ENCODE measurements at regions of chr5 and their contacts with region 1.

Region 1: DNA sequence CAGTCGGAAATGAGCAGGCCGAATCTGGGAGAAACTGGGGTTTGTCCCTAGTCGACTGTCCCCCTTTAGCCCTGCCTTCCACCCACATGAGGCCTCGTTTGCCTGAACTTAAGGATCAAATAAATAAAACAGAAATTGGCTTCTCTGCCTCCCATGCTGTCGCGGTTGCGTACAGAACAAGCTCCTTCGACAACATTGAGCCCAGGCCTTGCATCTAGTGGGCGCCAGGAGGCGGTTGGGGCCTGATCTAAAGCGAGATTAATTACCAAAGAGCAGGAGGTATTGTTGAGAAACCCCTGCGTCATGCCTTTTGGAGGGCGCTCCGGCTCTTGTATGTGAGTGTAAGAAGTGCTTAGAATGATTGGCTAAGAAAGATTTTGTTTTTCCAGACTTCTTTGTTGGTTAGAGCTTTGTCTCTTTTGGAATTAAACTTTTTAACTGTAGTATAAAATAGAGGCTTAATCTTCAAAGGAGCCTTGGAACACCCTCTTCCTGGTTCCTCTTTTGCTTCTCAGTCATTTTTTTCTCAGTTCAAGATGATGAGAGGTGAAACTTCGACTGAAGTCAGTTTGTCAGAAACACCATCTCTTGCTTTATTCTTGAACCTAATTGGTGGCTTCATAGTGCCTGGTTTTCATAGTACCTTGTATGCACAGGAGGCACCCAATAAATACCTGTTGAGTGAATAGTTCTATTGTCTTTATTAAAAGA is 827 bp downstream of the ATP6V0E1 start:
- DNase-seq: peak; percentile 74 to 88
- ATAC-seq: peak; percentile 85
- H3K4me3 ChIP-seq: peak overlapping the region; percentile 79 to 91 (median 82)
- H3K27ac ChIP-seq: peak overlapping the region; percentile 95 to 98 (median 96)
- H3K4me1 ChIP-seq: peaks cover 8 to 23% of the 10 kb centered on the region in 2 donors
- H3K27me3 ChIP-seq: no peaks in the 10 kb centered on the region
- CTCF ChIP-seq: peak; percentile 15 to 56 (median 41)
- POLR2A ChIP-seq: no peak

Region 2: DNA sequence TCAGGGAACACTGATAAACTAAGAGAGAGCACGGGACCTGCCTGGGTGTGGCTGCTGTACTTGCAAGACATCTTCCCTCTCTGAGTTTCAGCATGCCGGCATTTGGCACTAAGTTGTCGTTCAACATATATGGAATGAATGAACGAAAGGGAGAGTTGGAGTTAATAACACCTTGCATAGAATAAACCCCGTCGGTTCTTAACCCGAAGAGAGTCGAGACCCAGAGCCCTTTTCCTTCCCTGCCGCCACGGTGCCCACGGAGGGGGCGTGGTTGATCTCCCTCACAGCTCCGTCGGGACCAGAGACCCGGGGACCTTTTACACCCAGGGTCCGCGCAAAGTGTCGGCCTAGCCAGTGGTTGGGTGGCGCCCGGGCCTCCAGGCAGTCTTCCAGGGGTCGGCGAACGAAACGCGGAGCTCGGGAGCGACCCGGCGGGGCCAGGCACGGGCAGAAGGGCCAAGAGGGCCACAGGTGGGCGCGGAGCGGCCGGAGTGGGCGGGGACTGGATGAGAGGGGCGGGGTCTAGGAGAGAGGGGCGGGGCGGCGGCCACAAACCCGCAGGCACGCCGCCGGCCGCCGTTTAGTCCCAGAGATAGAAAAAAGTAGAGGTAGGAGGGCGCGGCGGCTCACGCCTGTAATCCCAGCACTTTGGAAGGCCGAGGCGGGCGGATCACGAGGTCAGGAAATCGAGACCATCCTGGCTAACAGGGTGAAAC is 25.9 kb before region 1 on chr5:
- in situ Hi-C with region 1: no loop called
- intact Hi-C with region 1: loop called (anchors 1 kb)
- DNase-seq: peak; percentile 37 to 41
- ATAC-seq: peak; percentile 77 to 78
- H3K4me3 ChIP-seq: peak overlapping the region; percentile 65 to 98 (median 96)
- H3K27ac ChIP-seq: peak overlapping the region; percentile 68 to 92 (median 86)
- H3K4me1 ChIP-seq: peaks cover 10 to 22% of the 10 kb centered on the region in 2 donors
- H3K27me3 ChIP-seq: no peaks in the 10 kb centered on the region
- CTCF ChIP-seq: no peak
- POLR2A ChIP-seq: no peak

Region 3: GRCh38 chr5:172999372-172999973 is 15.1 kb after region 1 on chr5:
- in situ Hi-C with region 1: no loop called
- intact Hi-C with region 1: loop called (anchors 2 kb)
- DNase-seq: no peak
- ATAC-seq: peak; percentile 46 to 66
- H3K4me3 ChIP-seq: no peak overlapping the region
- H3K27ac ChIP-seq: peak overlapping the region in 3 of 4 donors; percentile 27 to 49 (median 42)
- H3K4me1 ChIP-seq: peaks cover 27% of the 10 kb centered on the region in 2 donors
- H3K27me3 ChIP-seq: no peaks in the 10 kb centered on the region
- CTCF ChIP-seq: no peak
- POLR2A ChIP-seq: no peak

Region 4: DNA sequence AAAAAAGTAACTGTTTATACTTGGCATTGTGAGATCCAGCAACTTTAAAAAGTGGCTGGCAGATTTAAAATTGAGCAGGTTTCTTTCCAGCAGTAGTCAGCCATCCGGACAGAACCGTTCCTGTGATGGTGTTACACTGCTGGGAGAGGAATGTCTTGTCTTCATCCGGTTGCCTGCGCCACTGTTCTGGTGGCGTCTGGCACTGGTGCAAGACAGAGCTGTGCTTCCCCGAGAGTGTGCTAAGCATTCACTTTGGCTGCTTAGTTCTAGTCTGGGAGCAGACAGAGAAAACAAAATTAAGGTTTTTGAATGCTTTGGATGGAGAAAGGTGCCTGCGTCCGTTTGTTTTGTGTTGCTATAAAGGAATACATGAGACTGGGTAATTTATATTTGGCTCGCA is 36.2 kb after region 1 on chr5:
- in situ Hi-C with region 1: no loop called
- intact Hi-C with region 1: loop called (anchors 5 kb)
- DNase-seq: no peak
- ATAC-seq: peak in 1 of 2 donors; percentile 35
- H3K4me3 ChIP-seq: no peak overlapping the region
- H3K27ac ChIP-seq: peak overlapping the region; percentile 23 to 31 (median 27)
- H3K4me1 ChIP-seq: peaks cover 30 to 31% of the 10 kb centered on the region in 2 donors
- H3K27me3 ChIP-seq: no peaks in the 10 kb centered on the region
- CTCF ChIP-seq: no peak
- POLR2A ChIP-seq: no peak

Region 5: GRCh38 chr5:173057062-173057924 is 72.9 kb after region 1 on chr5:
- in situ Hi-C with region 1: loop called in 3 of 4 experiments (anchors 10 kb)
- intact Hi-C with region 1: loop called (anchors 1 kb)
- DNase-seq: peak; percentile 99
- ATAC-seq: peak; percentile 88 to 91
- H3K4me3 ChIP-seq: peak overlapping the region; percentile 85 to 96 (median 92)
- H3K27ac ChIP-seq: peak overlapping the region; percentile 98 to 99 (median 99)
- H3K4me1 ChIP-seq: peaks cover 18 to 31% of the 10 kb centered on the region in 2 donors
- H3K27me3 ChIP-seq: no peaks in the 10 kb centered on the region
- CTCF ChIP-seq: peak in 1 of 5 experiments; percentile 24
- POLR2A ChIP-seq: peak; percentile 32 to 78

Region 6: GRCh38 chr5:173114536-173114935 is 130.1 kb after region 1 on chr5:
- in situ Hi-C with region 1: no loop called
- intact Hi-C with region 1: no loop called
- DNase-seq: no peak
- ATAC-seq: no peak
- H3K4me3 ChIP-seq: no peak overlapping the region
- H3K27ac ChIP-seq: no peak overlapping the region
- H3K4me1 ChIP-seq: no peaks in the 10 kb centered on the region
- H3K27me3 ChIP-seq: no peaks in the 10 kb centered on the region
- CTCF ChIP-seq: no peak
- POLR2A ChIP-seq: no peak

Region 7: DNA sequence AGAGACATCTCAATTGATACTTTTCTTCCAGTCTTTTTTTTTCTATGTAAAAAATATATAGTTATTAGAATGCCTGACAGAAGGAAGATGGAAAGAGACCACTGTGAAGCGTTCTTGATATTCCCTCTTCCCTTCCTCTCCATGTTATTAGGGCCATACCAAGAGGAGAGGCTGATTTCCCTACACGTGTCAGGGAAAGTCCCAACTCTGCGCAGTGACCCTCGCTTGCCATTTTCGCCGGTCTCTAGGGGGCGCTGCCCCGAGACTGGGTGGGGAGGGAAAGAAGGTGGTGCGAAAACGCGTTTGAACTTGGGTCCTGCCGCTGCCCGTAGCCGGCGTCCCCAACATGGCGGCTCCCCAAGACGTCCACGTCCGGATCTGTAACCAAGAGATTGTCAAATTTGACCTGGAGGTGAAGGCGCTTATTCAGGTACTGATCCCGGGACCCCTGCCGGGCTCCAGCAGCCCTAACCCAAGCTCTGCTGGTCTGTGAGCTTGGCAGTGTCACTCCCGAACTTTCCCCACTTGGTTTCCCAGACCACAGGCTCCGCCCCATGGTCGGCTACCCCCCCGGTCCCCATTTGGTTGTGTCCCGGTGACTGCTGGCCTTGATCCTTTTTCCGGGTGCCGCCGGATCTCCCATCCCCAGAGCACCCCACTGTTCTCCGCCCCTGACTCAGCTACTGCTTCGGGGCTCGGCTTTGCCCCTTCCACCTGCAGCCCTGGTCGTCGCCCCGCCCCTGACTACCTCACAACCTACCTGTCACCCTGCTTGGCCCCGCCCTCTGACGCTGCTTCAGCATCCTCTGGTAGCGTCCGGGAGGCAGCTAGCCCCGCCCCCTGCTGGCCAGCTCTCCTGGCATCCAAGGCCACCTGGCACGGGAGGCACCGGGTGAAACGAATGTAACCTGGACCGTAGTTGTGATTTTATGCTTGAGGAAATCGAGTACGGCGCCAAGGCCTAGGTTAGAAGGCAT is 160.1 kb after region 1 on chr5 and contains the start of gene BNIP1:
- in situ Hi-C with region 1: loop called (anchors 5 to 25 kb)
- intact Hi-C with region 1: loop called (anchors 1 kb)
- DNase-seq: peak; percentile 77 to 91
- ATAC-seq: peak; percentile 89 to 93
- H3K4me3 ChIP-seq: peak within 1 kb of the TSS; percentile 73 to 98 (median 84)
- H3K27ac ChIP-seq: peak within 1 kb of the TSS; percentile 83 to 91 (median 86)
- H3K4me1 ChIP-seq: peaks cover 3 to 11% of the 10 kb centered on the region in 2 donors
- H3K27me3 ChIP-seq: no peaks in the 10 kb centered on the region
- CTCF ChIP-seq: peak; percentile 86 to 92 (median 87)
- POLR2A ChIP-seq: peak; percentile 33 to 51
- total RNA-seq, gene BNIP1: 9.2 to 21.6 (median 17.1) TPM

Region 8: DNA sequence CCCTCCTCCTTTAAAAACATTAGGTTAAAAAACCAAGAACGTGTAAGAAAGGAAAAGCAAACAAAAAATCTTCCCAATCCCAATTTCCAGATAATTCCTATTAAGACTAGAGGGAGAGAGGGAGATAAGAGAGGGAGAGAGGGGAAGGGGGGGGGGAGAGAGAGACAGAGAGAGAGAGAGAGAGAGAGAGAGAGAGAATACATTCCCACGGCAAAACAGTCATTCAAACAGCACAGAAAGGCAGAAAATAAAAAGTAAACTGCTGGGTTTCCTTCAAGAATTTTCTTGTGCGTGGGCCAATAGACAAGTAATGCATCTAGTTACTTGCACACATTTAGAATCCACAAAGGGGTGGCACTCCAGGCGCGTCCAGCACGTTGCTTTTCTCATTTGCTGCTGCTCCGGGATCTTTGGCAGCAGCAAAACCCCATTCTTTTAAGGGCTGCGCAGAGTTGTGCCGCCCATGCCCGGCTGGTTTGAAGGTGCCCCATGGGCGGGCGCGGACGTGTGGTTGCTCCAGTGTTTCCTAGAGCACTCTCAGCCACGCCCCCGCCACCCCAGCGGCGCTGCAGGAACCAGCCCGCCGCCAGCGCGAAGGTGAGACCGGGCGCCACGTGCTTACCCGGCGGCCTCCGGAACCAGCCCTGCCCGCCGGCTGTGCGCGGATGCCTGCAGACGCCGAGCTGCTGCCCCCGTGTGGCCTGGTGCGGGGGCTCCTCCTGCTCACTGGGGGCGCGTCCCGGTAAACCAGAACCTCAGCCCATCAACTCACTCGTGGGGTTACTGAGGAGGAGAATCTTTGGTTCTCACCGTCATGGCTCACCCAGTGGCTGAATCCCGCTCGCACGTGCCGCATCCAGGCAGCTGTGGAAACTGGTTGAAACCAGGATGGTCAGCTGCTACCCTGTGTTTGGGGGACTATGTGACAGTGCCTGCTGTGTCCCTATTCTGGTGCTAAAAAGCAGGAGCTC is 299.2 kb after region 1 on chr5:
- in situ Hi-C with region 1: no loop called
- intact Hi-C with region 1: loop called (anchors 2 kb)
- DNase-seq: peak; percentile 14 to 55
- ATAC-seq: peak in 1 of 2 donors; percentile 88
- H3K4me3 ChIP-seq: peak overlapping the region in 2 of 4 donors; percentile 2 to 31
- H3K27ac ChIP-seq: no peak overlapping the region
- H3K4me1 ChIP-seq: peaks cover 4 to 6% of the 10 kb centered on the region in 2 donors
- H3K27me3 ChIP-seq: peaks cover 16 to 26% (median 21%) of the 10 kb centered on the region in 3 donors
- CTCF ChIP-seq: peak in 4 of 5 experiments; percentile 54 to 66 (median 60)
- POLR2A ChIP-seq: no peak

Measured in gastrocnemius medialis (tissue), 4 donors.